ENCODE measurements at regions of chr9 and their contacts with region 1.

Region 1: GRCh38 chr9:37753489-37754190 is at the start of gene TRMT10B:
- DNase-seq: peak; percentile 65
- H3K4me3 Mint-ChIP-seq: peak within 1 kb of the TSS; percentile 95
- H3K27ac Mint-ChIP-seq: peak within 1 kb of the TSS; percentile 82
- H3K4me1 Mint-ChIP-seq: peaks cover 27% of the 10 kb centered on the region
- H3K27me3 Mint-ChIP-seq: no peaks in the 10 kb centered on the region
- total RNA-seq, gene TRMT10B: 10.0 and 11.8 TPM in 2 replicates

Region 2: GRCh38 chr9:36400332-36401163 is 1353.1 kb before region 1 on chr9:
- intact Hi-C with region 1: no loop called
- DNase-seq: peak; percentile 86
- H3K4me3 Mint-ChIP-seq: peak overlapping the region; percentile 89
- H3K27ac Mint-ChIP-seq: peak overlapping the region; percentile 97
- H3K4me1 Mint-ChIP-seq: peaks cover 47% of the 10 kb centered on the region
- H3K27me3 Mint-ChIP-seq: no peaks in the 10 kb centered on the region

Region 3: GRCh38 chr9:37740636-37741328 is 12.9 kb before region 1 on chr9:
- intact Hi-C with region 1: no loop called
- DNase-seq: no peak
- H3K4me3 Mint-ChIP-seq: no peak overlapping the region
- H3K27ac Mint-ChIP-seq: no peak overlapping the region
- H3K4me1 Mint-ChIP-seq: no peaks in the 10 kb centered on the region
- H3K27me3 Mint-ChIP-seq: peaks cover 8% of the 10 kb centered on the region

Region 4: GRCh38 chr9:37784616-37785483 is 31.2 kb after region 1 on chr9 and contains the start of gene EXOSC3:
- intact Hi-C with region 1: loop called (anchors 1 kb)
- DNase-seq: peak; percentile 85
- H3K4me3 Mint-ChIP-seq: peak within 1 kb of the TSS; percentile 99
- H3K27ac Mint-ChIP-seq: peak within 1 kb of the TSS; percentile 97
- H3K4me1 Mint-ChIP-seq: peaks cover 40% of the 10 kb centered on the region
- H3K27me3 Mint-ChIP-seq: no peaks in the 10 kb centered on the region
- total RNA-seq, gene EXOSC3: 94.8 and 116 TPM in 2 replicates